ENCODE measurements at regions of chr16 and their contacts with region 1.

Region 1: GRCh38 chr16:22386976-22387375 is 12.6 kb upstream of the CDR2 start:
- DNase-seq: no peak
- ATAC-seq: peak in 3 of 8 donors; percentile 14 to 42 (median 20)
- H3K4me3 ChIP-seq: no peak overlapping the region
- H3K27ac ChIP-seq: no peak overlapping the region
- H3K4me1 ChIP-seq: peaks cover 0 to 10% (median 0%) of the 10 kb centered on the region in 9 donors
- H3K27me3 ChIP-seq: no peaks in the 10 kb centered on the region
- CTCF ChIP-seq: no peak

Region 2: GRCh38 chr16:22333457-22333994 is 53.5 kb before region 1 on chr16:
- intact Hi-C with region 1: loop called in 1 of 10 experiments (anchors 5 kb)
- DNase-seq: no peak
- ATAC-seq: peak in 4 of 8 donors; percentile 30 to 68 (median 64)
- H3K4me3 ChIP-seq: no peak overlapping the region
- H3K27ac ChIP-seq: peak overlapping the region in 1 of 10 donors; percentile 2
- H3K4me1 ChIP-seq: peaks cover 0 to 8% (median 0%) of the 10 kb centered on the region in 9 donors
- H3K27me3 ChIP-seq: no peaks in the 10 kb centered on the region
- CTCF ChIP-seq: no peak

Region 3: DNA sequence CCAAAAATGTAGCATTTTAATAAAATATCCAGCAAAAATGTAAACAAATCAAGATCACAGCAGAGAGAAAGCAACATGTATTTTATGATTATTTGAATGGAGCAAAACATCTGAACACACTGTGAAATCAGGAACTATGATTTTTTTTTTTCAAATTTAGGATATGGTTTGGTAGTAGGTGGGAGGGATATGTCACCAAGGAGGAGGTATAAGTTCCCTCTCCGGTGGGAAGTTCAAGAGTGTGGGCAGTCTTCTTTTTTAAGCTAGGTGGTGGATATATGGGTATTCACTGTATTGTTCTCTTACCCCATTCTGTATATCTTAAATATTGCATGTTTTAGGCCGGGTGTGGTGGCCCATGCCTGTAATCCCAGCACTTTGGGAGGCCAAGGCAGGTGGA is 22.7 kb before region 1 on chr16:
- intact Hi-C with region 1: loop called in 1 of 10 experiments (anchors 2 kb)
- DNase-seq: no peak
- ATAC-seq: no peak
- H3K4me3 ChIP-seq: no peak overlapping the region
- H3K27ac ChIP-seq: no peak overlapping the region
- H3K4me1 ChIP-seq: peaks cover 0 to 34% (median 6%) of the 10 kb centered on the region in 9 donors
- H3K27me3 ChIP-seq: no peaks in the 10 kb centered on the region
- CTCF ChIP-seq: no peak